CD8-positive, alpha-beta T cell (primary cell): ENCODE measurements at regions of chr1 and their contacts with region 1.

Region 1: GRCh38 chr1:97938285-97938642 is 17.4 kb upstream of the DPYD start:
- DNase-seq: no peak
- ATAC-seq: no peak
- H3K4me3 ChIP-seq: no peak overlapping the region
- H3K4me3 Mint-ChIP-seq: no peak overlapping the region
- H3K27ac ChIP-seq: no peak overlapping the region
- H3K27ac Mint-ChIP-seq: no peak overlapping the region
- H3K4me1 ChIP-seq: peaks cover 8% of the 10 kb centered on the region
- H3K4me1 Mint-ChIP-seq: peaks cover 24% of the 10 kb centered on the region
- H3K27me3 ChIP-seq: no peaks in the 10 kb centered on the region
- H3K27me3 Mint-ChIP-seq: no peaks in the 10 kb centered on the region
- CTCF ChIP-seq: no peak

Region 2: GRCh38 chr1:97901017-97901658 is 37.1 kb before region 1 on chr1:
- CTCF ChIA-PET with region 1: no interaction called
- POLR2A ChIA-PET with region 1: no interaction called
- intact Hi-C with region 1: loop called in 1 of 2 experiments (anchors 5 kb)
- DNase-seq: peak in 1 of 9 experiments; percentile 23
- ATAC-seq: no peak
- H3K4me3 ChIP-seq: no peak overlapping the region
- H3K4me3 Mint-ChIP-seq: peak overlapping the region; percentile 20
- H3K27ac ChIP-seq: peak overlapping the region in 1 of 2 experiments; percentile 10
- H3K27ac Mint-ChIP-seq: peak overlapping the region; percentile 73
- H3K4me1 ChIP-seq: peaks cover 7% of the 10 kb centered on the region
- H3K4me1 Mint-ChIP-seq: peaks cover 53% of the 10 kb centered on the region
- H3K27me3 ChIP-seq: no peaks in the 10 kb centered on the region
- H3K27me3 Mint-ChIP-seq: no peaks in the 10 kb centered on the region
- CTCF ChIP-seq: no peak